ENCODE measurements at regions of chr4 and their contacts with region 1.

Region 1: DNA sequence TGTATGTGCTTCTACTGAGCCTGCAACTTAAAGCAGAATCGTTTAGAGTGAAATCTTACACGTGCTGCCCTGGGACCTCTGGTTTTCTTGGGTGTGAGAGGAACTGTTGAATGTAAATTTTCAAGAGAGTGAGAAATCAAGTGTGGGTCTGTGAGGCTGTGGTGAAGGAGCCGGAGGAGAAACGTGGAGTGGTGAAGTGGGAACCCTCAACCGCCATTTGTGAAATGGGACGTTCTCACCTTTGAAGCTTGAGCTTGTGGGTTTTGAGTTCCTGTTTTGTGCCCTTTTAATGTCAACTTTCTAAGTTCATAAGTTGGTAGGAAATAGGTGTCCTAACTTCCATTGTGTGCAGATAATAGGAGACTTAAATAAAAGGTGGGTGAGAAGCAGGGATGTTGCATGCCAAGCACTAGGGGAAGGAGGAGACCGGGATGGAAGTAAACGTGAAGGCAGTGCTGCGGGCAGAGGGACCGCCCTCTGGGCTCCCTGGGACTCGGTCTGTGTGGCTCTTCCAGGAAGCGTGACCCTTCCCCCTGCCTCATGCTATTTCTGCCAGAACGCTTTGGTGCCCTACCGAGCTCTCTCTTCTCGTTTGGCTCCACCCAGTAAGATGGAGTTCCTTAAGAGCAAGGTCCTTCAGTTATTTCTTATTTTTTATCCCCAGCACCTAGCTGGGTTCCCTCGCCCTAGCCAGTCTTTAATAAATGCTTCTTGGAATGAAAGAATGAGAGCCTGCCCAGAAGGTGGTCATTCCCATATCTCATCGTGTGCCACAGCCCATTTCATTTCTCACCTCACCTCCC is 56.0 kb downstream of the TMEM131L start:
- DNase-seq: no peak
- CTCF ChIP-seq: no peak

Region 2: GRCh38 chr4:153432968-153433753 is 89.0 kb before region 1 on chr4:
- in situ Hi-C with region 1: loop called (anchors 10 kb)
- DNase-seq: peak; percentile 76
- CTCF ChIP-seq: peak; percentile 86

Region 3: GRCh38 chr4:153661211-153661822 is 139.1 kb after region 1 on chr4:
- in situ Hi-C with region 1: no loop called
- DNase-seq: no peak
- CTCF ChIP-seq: no peak

Measured in GM13976 (cell line).